ENCODE measurements at regions of chr17 and their contacts with region 1.

Region 1: GRCh38 chr17:20992987-20993862 is 49.6 kb downstream of the USP22 start:
- DNase-seq: peak; percentile 89
- H3K4me3 Mint-ChIP-seq: no peak overlapping the region
- H3K27ac Mint-ChIP-seq: no peak overlapping the region
- H3K4me1 Mint-ChIP-seq: peaks cover 2% of the 10 kb centered on the region
- H3K27me3 Mint-ChIP-seq: no peaks in the 10 kb centered on the region

Region 2: GRCh38 chr17:20948984-20949777 is 44.0 kb before region 1 on chr17:
- intact Hi-C with region 1: loop called (anchors 1 kb)
- DNase-seq: no peak
- H3K4me3 Mint-ChIP-seq: no peak overlapping the region
- H3K27ac Mint-ChIP-seq: no peak overlapping the region
- H3K4me1 Mint-ChIP-seq: no peaks in the 10 kb centered on the region
- H3K27me3 Mint-ChIP-seq: peaks cover 7% of the 10 kb centered on the region

Region 3: GRCh38 chr17:21034340-21035235 is 41.4 kb after region 1 on chr17:
- intact Hi-C with region 1: no loop called
- DNase-seq: peak; percentile 85
- H3K4me3 Mint-ChIP-seq: peak overlapping the region; percentile 78
- H3K27ac Mint-ChIP-seq: peak overlapping the region; percentile 93
- H3K4me1 Mint-ChIP-seq: peaks cover 59% of the 10 kb centered on the region
- H3K27me3 Mint-ChIP-seq: no peaks in the 10 kb centered on the region

Region 4: DNA sequence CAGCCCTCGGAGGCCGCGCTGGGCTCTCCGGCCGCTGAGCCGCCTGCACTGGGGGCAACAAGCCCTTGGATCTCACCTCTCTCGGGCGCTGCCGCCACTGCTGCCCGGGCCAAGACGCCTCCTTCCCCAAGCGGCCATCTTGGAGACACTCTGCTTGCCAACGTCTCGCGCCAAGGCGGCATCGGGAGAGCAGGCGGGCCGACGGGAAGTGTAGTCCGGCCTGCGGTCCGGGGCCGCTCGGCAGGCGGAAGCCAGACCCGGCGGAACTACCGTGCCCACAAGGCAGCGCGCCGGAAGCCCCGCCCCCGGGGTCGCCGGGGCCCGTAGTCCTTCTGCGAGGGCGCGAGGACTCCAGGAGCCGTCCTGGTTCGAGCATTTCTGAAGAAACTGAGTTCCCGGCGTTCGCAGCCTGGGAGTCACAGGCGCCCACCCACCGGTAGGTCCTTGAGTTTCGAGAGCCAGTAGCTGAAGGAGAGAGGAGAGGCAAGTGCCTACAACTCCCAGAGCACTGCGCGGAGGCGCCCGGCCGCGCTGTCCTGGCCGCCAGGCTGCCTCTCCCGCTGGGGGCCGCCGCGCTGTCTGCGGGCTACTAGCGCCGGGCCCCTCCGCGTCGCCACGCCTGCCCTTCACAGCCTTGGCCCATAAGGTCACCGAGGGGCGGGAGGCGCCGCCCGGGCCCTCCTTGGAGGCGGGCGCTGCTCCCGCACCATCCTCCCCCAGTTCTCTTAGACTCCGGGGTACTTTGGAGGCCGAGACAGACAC is 221.0 kb after region 1 on chr17 and contains the start of gene TMEM11:
- intact Hi-C with region 1: no loop called
- DNase-seq: peak; percentile 99
- H3K4me3 Mint-ChIP-seq: peak within 1 kb of the TSS; percentile 90
- H3K27ac Mint-ChIP-seq: peak within 1 kb of the TSS; percentile 95
- H3K4me1 Mint-ChIP-seq: peaks cover 48% of the 10 kb centered on the region
- H3K27me3 Mint-ChIP-seq: no peaks in the 10 kb centered on the region
- total RNA-seq, gene TMEM11: 33.5 and 34.7 TPM in 2 replicates

Measured in activated CD4-positive, alpha-beta T cell treated with anti-CD3 and anti-CD28 coated beads, Interleukin-2, amount 10 ng/mL, durations not matched to agents 24 days and 14 days (primary cell).